Naive thymus-derived CD4-positive, alpha-beta T cell (primary cell): ENCODE measurements at regions of chr12 and their contacts with region 1.

Region 1: DNA sequence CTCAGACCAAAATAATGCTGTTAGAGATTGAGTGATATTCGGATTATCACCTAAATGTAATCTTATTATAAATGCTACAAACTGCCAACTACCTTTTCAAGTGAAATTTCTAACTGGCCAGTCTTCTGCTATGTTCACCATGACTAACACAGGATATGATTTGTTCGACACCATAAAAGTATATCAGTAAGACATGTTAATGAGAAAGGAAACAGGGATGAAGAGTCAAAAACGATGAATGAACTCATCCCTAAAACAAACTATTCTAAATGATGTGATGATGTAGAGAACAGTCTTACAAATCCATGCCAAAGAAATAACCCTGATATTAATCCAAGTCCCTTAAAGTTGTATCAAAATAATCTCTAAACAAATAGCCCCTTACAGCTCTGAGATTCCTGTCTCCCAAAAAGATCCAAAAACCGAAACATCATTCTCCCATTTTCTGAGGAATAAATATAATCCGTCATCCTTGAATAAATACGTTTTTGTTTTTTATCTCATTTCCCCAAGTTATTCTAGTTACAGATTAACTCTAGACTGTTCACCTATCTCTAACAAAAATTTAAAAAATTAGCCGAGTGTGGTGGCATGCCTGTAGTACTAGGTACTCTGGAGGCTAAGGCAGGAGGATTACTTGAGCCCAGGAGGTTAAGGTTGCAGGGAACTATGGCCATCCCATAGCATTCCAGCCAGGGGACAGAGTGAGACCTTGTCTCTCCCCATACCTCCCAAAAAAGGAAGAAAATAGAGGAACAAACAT is 9.1 kb downstream of the SCAF11 start:
- DNase-seq: no peak
- ATAC-seq: no peak
- H3K4me3 ChIP-seq: no peak overlapping the region
- H3K4me3 Mint-ChIP-seq: peak overlapping the region in 8 of 10 donors; percentile 4 to 95 (median 44)
- H3K27ac ChIP-seq: no peak overlapping the region
- H3K27ac Mint-ChIP-seq: no peak overlapping the region
- H3K4me1 ChIP-seq: peaks cover 35 to 41% of the 10 kb centered on the region in 2 donors
- H3K4me1 Mint-ChIP-seq: peaks cover 71 to 100% (median 95%) of the 10 kb centered on the region in 7 donors
- H3K27me3 ChIP-seq: no peaks in the 10 kb centered on the region
- H3K27me3 Mint-ChIP-seq: no peaks in the 10 kb centered on the region

Region 2: GRCh38 chr12:45077251-45077650 is 904.0 kb before region 1 on chr12:
- CTCF ChIA-PET with region 1: no interaction called
- POLR2A ChIA-PET with region 1: no interaction called
- intact Hi-C with region 1: no loop called
- DNase-seq: no peak
- ATAC-seq: no peak
- H3K4me3 ChIP-seq: no peak overlapping the region
- H3K4me3 Mint-ChIP-seq: no peak overlapping the region
- H3K27ac ChIP-seq: no peak overlapping the region
- H3K27ac Mint-ChIP-seq: no peak overlapping the region
- H3K4me1 ChIP-seq: no peaks in the 10 kb centered on the region
- H3K4me1 Mint-ChIP-seq: no peaks in the 10 kb centered on the region
- H3K27me3 ChIP-seq: no peaks in the 10 kb centered on the region
- H3K27me3 Mint-ChIP-seq: peaks cover 5 to 23% (median 11%) of the 10 kb centered on the region in 5 donors

Region 3: GRCh38 chr12:45966486-45966885 is 14.8 kb before region 1 on chr12:
- CTCF ChIA-PET with region 1: no interaction called
- POLR2A ChIA-PET with region 1: no interaction called
- intact Hi-C with region 1: loop called in 1 of 2 experiments (anchors 2 kb)
- DNase-seq: no peak
- ATAC-seq: no peak
- H3K4me3 ChIP-seq: no peak overlapping the region
- H3K4me3 Mint-ChIP-seq: no peak overlapping the region
- H3K27ac ChIP-seq: no peak overlapping the region
- H3K27ac Mint-ChIP-seq: no peak overlapping the region
- H3K4me1 ChIP-seq: peaks cover 0 to 6% of the 10 kb centered on the region in 2 donors
- H3K4me1 Mint-ChIP-seq: peaks cover 36 to 88% (median 76%) of the 10 kb centered on the region in 7 donors
- H3K27me3 ChIP-seq: no peaks in the 10 kb centered on the region
- H3K27me3 Mint-ChIP-seq: no peaks in the 10 kb centered on the region